ENCODE measurements at regions of chr13 and their contacts with region 1.

Region 1: DNA sequence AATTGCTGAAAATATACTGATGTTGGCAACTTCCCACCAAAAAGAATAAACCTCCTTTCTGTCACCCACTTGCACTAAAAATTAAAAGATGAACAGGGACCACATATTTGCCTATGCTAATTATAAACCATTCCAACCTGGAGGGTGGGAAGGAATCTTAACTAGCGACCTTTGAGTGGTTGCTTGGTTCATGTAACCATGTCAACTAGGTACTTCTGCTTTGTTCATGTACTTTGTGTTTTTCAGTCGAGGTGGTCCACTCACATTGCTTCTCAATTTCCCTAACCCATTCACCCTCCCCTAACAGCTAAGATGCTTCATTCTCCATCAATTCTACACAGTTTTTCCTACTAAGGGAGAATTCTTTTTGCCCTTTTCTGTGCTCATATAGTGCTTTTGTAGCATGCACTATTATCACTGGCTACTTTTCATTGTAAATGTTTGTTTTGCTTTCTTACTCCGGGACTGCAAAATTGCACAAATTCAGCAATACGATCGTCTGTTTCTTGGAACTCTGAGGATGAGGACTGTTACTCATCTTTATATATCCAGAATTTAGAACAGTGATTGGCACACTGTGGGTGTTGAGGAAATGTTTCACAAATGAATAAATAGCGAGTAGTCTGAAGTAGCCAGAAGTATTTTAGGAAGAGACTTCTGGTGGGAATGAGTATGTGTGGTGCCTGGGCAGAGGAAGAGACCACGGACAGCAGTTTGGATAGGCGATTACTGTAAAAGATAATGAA is 187.5 kb downstream of the GPC6 start:
- DNase-seq: no peak
- ATAC-seq: no peak
- H3K4me3 ChIP-seq: no peak overlapping the region
- H3K27ac ChIP-seq: no peak overlapping the region
- H3K4me1 ChIP-seq: no peaks in the 10 kb centered on the region
- H3K27me3 ChIP-seq: no peaks in the 10 kb centered on the region
- CTCF ChIP-seq: no peak

Region 2: DNA sequence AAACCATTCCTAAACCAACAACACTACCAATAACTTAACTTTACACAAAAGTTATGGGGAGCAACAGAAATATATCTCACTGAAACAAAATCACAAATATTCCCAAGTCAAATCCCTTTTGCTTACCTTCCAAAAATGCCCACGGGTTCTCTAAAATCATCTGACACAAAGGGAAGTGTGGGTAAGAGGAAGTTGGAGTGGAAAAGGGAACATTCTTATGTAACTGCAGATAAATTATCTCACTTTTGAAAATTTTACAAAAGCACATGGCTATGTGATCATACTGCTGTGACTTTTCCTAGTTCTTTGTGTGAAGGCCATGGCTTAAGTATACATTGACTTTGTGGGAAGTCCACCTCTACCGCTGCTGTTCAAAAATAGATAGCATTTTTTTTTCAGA is 163.0 kb after region 1 on chr13:
- intact Hi-C with region 1: loop called in 1 of 10 experiments (anchors 10 kb)
- DNase-seq: no peak
- ATAC-seq: no peak
- H3K4me3 ChIP-seq: no peak overlapping the region
- H3K27ac ChIP-seq: no peak overlapping the region
- H3K4me1 ChIP-seq: no peaks in the 10 kb centered on the region
- H3K27me3 ChIP-seq: no peaks in the 10 kb centered on the region
- CTCF ChIP-seq: no peak